CD4-positive, alpha-beta memory T cell (primary cell): ENCODE measurements at regions of chr7 and their contacts with region 1.

Region 1: DNA sequence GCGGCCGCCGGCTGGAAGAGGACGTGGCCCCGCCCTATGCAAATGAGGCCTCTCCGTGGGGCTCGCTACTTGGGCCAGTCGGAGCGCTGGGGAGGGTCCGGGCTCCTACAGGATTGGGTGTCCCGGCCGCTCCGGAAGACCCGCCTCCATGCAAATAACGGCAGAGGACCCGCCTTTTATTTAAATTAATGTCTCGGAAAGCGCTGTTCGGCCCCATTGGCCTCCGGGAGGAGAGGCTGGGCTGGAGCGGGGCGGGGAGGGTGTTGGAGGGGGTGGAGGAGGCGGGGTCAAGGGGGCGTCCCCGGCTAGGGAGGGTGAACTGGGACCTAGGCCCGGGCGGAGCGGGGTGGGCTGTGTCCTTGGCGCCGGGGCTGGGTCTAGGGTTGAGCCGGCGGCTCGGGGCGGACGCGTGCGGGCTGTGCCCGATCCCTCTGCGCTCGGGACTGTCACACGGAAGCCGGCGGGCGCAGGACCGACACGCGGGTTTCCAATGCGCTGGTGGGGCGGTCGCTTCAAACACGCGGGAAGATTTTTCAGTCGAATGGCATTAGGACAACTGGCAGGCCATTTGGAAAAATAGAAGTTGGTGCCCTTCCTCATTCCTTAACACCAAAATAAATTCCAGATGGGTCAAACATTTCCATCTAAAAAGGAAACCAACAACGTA is 344 bp upstream of the POLM start:
- DNase-seq: peak; percentile 96 to 99 (median 99)
- H3K4me3 ChIP-seq: peak overlapping the region; percentile 42 to 62
- H3K4me3 Mint-ChIP-seq: peak overlapping the region; percentile 80 to 95 (median 86)
- H3K27ac ChIP-seq: peak overlapping the region; percentile 81
- H3K27ac Mint-ChIP-seq: peak overlapping the region; percentile 57 to 93 (median 78)
- H3K4me1 ChIP-seq: peaks cover 23% of the 10 kb centered on the region
- H3K4me1 Mint-ChIP-seq: peaks cover 15 to 39% (median 20%) of the 10 kb centered on the region in 4 donors
- H3K27me3 ChIP-seq: no peaks in the 10 kb centered on the region
- H3K27me3 Mint-ChIP-seq: no peaks in the 10 kb centered on the region

Region 2: GRCh38 chr7:44044315-44045225 is 38.1 kb before region 1 on chr7 and contains the start of gene DBNL:
- CTCF ChIA-PET with region 1: interaction called, 5 read pairs
- POLR2A ChIA-PET with region 1: interaction called, 29 read pairs
- intact Hi-C with region 1: loop called (anchors 1 kb)
- DNase-seq: peak; percentile 79 to 91 (median 82)
- H3K4me3 ChIP-seq: peak within 1 kb of the TSS; percentile 89 to 94
- H3K4me3 Mint-ChIP-seq: peak within 1 kb of the TSS; percentile 89 to 96 (median 93)
- H3K27ac ChIP-seq: peak within 1 kb of the TSS; percentile 96
- H3K27ac Mint-ChIP-seq: peak within 1 kb of the TSS; percentile 94 to 98 (median 96)
- H3K4me1 ChIP-seq: peaks cover 57% of the 10 kb centered on the region
- H3K4me1 Mint-ChIP-seq: peaks cover 32 to 66% (median 50%) of the 10 kb centered on the region in 4 donors
- H3K27me3 ChIP-seq: no peaks in the 10 kb centered on the region
- H3K27me3 Mint-ChIP-seq: no peaks in the 10 kb centered on the region
- total RNA-seq, gene DBNL: 157 to 166 TPM

Region 3: DNA sequence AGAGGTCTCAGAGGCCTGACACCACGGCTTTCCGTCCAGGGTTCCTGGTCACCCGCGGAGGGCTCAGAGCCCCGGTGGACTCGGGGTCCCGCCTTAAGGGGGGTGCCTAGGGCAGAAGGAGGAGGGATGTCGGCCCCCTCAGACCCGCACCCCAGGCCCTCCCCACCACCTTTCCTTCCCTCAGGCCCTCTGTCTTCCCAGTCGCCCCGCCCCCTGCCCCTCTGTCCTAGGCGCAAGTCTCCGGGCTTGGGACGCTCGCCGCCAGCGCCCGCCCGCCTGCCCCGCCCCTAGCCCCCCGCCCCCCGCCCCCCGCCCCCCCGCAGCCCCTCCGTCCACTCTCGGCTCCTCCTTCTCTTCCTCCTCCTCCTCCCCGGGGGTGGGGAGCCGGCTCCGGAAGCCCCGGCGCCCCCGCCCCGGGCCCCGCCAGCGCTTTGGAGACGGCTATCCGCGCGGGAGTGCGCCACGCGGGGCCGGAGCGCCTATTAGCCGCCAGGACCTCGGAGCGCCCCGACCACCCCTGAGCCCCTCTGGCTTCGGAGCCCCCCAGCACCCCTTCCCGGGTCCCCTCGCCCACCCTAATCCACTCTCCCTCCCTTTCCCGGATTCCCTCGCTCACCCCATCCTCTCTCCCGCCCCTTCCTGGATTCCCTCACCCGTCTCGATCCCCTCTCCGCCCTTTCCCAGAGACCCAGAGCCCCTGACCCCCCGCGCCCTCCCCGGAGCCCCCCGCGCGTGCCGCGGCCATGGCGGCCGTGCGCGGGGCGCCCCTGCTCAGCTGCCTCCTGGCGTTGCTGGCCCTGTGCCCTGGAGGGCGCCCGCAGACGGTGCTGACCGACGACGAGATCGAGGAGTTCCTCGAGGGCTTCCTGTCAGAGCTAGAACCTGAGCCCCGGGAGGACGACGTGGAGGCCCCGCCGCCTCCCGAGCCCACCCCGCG is 21.5 kb after region 1 on chr7 and contains the start of gene AEBP1:
- CTCF ChIA-PET with region 1: no interaction called
- POLR2A ChIA-PET with region 1: no interaction called
- intact Hi-C with region 1: loop called (anchors 1 kb)
- DNase-seq: peak in 1 of 5 donors; percentile 17
- H3K4me3 ChIP-seq: no peak within 1 kb of the TSS
- H3K4me3 Mint-ChIP-seq: peak within 1 kb of the TSS; percentile 60 to 79 (median 69)
- H3K27ac ChIP-seq: peak within 1 kb of the TSS; percentile 21
- H3K27ac Mint-ChIP-seq: peak within 1 kb of the TSS in 3 of 7 donors; percentile 11 to 55 (median 18)
- H3K4me1 ChIP-seq: peaks cover 5% of the 10 kb centered on the region
- H3K4me1 Mint-ChIP-seq: peaks cover 4 to 21% (median 7%) of the 10 kb centered on the region in 4 donors
- H3K27me3 ChIP-seq: peaks cover 7% of the 10 kb centered on the region
- H3K27me3 Mint-ChIP-seq: peaks cover 11 to 22% of the 10 kb centered on the region in 2 donors
- total RNA-seq, gene AEBP1: 7.8 TPM

Region 4: DNA sequence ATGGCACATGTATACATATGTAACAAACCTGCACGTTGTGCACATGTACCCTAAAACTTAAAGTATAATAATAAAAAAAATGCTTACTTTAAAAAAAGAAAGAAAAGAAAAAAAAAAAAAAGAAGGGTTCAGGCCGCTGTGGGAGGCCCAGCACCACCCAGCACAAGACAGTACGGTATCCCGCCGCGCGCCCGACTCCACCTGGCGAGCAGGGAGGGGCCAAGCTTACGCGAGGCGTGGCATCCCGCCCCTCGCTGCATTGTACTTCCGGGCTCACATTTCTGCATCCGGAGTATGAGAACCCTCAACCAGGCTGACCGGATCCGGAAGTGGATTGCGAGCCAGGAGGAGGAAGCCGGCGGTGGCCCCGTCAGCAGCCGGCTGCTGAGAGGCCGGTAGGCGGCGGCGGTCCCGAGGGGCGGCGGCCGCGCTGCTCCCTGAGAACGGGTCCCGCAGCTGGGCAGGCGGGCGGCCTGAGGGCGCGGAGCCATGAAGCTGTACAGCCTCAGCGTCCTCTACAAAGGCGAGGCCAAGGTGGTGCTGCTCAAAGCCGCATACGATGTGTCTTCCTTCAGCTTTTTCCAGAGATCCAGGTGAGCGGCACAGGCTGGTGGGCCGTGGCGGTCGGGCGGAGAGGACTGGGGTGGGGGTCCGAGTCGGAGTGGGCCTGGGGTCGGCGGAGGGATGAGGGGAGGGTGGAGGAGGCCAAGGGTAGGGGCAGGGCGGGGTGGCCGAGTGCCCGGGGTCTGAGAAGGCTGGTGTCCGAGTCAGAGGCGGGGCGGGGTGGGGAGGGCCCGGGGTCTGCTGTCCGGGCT is 118.2 kb after region 1 on chr7 and contains the start of gene YKT6:
- CTCF ChIA-PET with region 1: interaction called, 3 read pairs
- POLR2A ChIA-PET with region 1: interaction called, 3 read pairs
- intact Hi-C with region 1: loop called (anchors 1 kb)
- DNase-seq: peak; percentile 91 to 96 (median 93)
- H3K4me3 ChIP-seq: peak within 1 kb of the TSS; percentile 12 to 84
- H3K4me3 Mint-ChIP-seq: peak within 1 kb of the TSS; percentile 77 to 90 (median 85)
- H3K27ac ChIP-seq: peak within 1 kb of the TSS; percentile 71
- H3K27ac Mint-ChIP-seq: peak within 1 kb of the TSS; percentile 49 to 88 (median 70)
- H3K4me1 ChIP-seq: peaks cover 17% of the 10 kb centered on the region
- H3K4me1 Mint-ChIP-seq: peaks cover 25 to 40% (median 35%) of the 10 kb centered on the region in 4 donors
- H3K27me3 ChIP-seq: no peaks in the 10 kb centered on the region
- H3K27me3 Mint-ChIP-seq: peaks cover 8 to 9% of the 10 kb centered on the region in 2 donors
- total RNA-seq, gene YKT6: 62.7 to 63.2 TPM

Region 5: DNA sequence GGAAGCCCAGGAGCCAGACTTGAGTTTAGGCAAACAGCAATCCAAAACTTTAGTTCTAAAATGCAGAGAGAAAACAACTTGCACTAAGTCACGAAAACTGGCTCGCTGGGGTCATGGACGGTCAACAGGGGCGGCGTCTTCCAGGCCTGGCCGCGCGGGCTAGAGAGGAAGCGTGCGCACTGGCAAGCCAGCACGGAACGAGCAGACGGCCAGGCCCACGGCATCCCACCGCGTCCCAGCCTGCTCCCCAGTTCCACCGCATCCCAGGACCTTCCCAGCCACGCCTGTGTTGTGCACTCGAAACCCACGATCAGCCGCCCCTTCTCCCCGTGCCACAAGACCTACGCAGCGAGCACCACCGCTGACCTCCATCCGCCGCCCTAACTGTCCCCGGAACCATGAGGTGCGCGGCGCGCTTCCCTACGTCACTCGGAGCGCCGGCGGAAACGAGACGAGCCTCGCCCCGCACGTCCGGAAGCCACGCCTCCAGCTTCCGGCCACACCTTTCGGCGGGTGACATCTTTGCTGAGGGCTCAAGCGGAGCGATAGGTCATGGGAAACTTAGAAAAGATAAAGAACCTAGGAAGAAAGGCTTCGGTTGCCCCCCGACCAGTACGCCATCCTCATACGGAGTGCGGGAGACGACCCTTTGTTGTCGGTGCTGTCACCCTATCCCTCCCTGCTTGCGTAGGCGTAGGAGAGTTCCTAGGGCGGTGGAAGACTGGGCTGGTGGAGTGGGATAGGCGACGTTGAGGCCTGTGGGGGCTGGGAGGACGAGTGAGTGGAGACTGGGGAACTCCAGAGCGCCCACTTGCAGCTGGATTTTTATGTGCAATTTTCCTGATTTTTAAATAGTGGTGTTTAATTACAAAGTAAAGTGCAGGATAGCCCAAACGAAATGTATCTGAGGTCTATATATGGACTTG is 1028.9 kb after region 1 on chr7 and contains the start of gene TBRG4:
- CTCF ChIA-PET with region 1: no interaction called
- POLR2A ChIA-PET with region 1: no interaction called
- intact Hi-C with region 1: loop called (anchors 2 kb)
- DNase-seq: peak; percentile 91 to 94 (median 94)
- H3K4me3 ChIP-seq: peak within 1 kb of the TSS; percentile 94 to 95
- H3K4me3 Mint-ChIP-seq: peak within 1 kb of the TSS; percentile 91 to 99 (median 97)
- H3K27ac ChIP-seq: peak within 1 kb of the TSS; percentile 87
- H3K27ac Mint-ChIP-seq: peak within 1 kb of the TSS; percentile 97 to 100 (median 99)
- H3K4me1 ChIP-seq: peaks cover 48% of the 10 kb centered on the region
- H3K4me1 Mint-ChIP-seq: peaks cover 28 to 60% (median 44%) of the 10 kb centered on the region in 4 donors
- H3K27me3 ChIP-seq: no peaks in the 10 kb centered on the region
- H3K27me3 Mint-ChIP-seq: peaks cover 4% of the 10 kb centered on the region in 2 donors
- total RNA-seq, gene TBRG4: 103 to 129 TPM